ENCODE measurements at regions of chr1 and their contacts with region 1.

Region 1: DNA sequence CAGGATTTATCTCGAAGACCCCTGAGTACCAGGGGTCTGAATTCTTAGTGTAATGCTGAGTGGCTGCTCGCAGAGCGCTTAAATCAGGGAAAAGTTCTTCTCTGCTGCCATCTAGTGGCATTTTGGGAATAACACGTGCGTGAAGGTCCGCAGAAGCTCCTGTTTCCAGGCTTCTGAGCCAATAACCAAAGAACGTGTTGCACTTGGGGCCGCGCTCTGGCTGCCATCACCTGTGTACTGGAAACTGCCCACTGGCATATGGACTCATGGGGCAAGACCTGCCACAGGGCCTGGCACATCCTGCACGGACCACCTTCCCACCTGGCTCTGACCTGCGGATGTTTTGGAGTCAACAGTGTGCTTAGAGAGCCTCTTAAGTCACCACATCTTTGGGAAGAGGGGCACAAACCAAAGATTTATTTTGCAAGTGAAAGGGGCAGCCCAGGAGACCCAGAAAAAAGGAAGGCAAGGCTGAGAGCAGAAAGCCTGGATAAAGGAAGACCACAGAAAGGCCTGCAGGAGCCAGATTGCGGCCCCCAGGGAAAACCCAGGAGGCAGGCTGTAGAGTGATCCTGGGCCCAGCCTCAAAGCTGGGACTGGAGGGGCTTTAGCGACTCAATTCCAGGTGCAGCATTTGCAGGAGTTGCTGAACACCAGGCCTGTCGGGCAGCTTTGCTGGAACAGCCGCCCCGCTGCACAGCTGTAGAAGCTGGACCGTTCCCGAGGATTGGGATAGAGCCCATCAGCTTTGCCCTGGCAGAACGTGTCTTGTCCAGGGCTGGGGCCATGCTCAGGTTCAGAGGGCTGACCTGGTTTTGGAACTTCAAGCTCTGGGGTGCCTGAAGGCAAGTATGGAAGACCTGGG is 13.0 kb downstream of the CHIT1 start:
- DNase-seq: peak; percentile 88
- ATAC-seq: peak; percentile 85
- H3K4me3 ChIP-seq: no peak overlapping the region
- H3K27ac ChIP-seq: no peak overlapping the region
- H3K4me1 ChIP-seq: no peaks in the 10 kb centered on the region
- H3K27me3 ChIP-seq: peaks cover 42% of the 10 kb centered on the region
- CTCF ChIP-seq: peak; percentile 90

Region 2: DNA sequence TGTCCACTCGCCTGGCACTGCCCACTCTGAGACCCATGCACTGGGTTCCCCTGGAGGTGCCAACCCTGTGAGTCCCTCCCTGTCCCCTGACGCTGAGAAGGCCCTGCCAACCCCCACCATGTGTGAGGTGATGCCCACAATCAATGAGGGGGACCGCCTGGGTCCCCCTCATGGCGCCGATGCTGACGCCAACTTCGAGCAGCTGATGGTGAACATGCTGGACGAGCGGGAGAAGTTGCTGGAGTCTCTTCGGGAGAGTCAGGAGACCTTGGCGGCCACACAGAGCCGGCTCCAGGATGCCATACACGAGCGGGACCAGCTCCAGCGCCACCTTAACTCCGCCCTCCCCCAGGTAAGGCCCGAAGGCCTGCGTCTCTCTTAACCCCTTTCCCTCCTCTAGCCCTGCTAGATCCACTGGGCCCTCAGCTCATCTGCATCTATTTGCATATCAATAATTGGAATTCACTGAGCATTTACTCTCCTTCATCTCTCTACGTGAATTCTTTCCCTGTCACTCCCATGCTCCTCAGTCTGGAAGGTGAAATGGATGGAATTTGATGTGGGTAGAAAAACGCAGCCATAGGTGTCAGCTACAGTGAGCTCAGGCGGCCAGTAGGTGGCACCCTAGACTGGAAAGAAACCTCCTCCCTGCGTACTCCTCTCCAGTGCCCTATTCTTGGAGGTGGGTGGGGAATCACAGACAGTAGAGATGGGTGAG is 177.5 kb before region 1 on chr1:
- CTCF ChIA-PET with region 1: interaction called, 17 read pairs
- POLR2A ChIA-PET with region 1: interaction called, 4 read pairs
- intact Hi-C with region 1: loop called (anchors 1 kb)
- DNase-seq: peak; percentile 81
- ATAC-seq: peak; percentile 85
- H3K4me3 ChIP-seq: no peak overlapping the region
- H3K27ac ChIP-seq: no peak overlapping the region
- H3K4me1 ChIP-seq: peaks cover 11% of the 10 kb centered on the region; the same call in 1 of the 2 replicates
- H3K27me3 ChIP-seq: no peaks in the 10 kb centered on the region
- CTCF ChIP-seq: peak; percentile 98

Region 3: DNA sequence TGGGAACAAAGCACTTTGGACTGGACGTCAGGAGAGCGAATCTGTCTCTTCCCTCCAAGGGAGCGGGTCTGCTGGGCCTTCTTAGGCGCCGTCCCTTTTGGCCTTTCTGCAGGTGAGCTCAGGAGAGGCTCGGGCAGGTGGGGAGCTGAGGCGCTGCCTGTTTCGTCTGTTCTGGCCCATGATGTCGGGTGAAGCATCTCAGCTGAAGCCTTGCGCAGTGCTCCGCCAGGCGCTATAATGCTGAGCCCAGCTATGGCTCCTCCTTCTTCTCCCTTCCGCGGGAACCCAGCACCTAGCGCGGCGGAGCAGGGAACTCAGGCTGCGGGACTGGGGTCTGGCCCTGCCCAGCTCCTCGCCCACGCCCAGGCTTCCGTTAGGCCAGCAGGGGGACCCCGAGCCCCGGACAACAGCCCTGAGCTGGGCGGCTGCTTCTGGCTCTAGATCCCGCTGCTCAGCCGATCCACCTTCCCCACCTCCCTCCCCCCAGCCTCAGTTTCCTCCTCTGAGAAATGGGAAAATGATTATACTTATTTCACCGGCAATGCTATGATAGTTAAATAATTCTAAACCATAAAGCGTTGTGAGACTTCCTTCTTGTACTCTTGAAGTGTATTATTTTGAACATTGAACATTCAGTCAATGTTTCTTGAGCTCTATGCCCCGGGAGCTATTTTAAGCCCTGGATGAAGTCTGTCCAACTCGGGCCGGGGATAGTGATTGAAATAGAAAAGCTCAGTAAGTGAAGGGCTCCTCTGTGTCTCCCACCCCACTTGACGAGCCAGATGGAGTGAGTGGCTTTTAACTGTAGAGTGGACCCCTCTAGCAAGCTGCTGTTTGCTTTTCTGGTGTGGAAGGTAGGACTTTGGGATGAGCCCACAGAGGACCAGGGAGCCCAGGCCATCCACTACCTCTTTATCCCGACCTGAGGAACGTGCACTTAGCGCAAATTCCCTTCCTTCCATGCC is 98.6 kb before region 1 on chr1:
- CTCF ChIA-PET with region 1: interaction called, 36 read pairs
- POLR2A ChIA-PET with region 1: no interaction called
- intact Hi-C with region 1: loop called (anchors 1 kb)
- DNase-seq: peak; percentile 70
- ATAC-seq: peak; percentile 98
- H3K4me3 ChIP-seq: no peak overlapping the region
- H3K27ac ChIP-seq: no peak overlapping the region
- H3K4me1 ChIP-seq: no peaks in the 10 kb centered on the region
- H3K27me3 ChIP-seq: peaks cover 54% of the 10 kb centered on the region
- CTCF ChIP-seq: peak; percentile 90

Region 4: DNA sequence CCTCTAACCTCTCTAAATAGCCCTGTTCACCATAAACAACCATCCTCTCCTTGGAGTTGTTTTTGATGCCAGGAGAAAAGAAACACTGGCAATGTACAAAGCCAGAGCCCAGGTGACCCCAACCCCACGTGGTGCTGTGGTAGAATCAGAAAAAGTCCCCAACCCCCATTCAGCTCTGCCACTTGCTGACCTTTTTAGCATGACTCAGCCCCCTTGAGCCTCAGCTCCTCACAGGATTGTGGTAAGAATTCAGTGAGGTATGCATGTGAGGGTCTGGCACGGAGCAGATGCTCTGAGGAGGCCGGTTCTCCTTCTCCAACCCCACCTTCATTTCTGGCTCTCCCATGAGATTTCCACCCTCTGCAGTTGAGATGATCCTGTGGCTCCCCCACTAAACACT is 18.9 kb before region 1 on chr1:
- CTCF ChIA-PET with region 1: no interaction called
- POLR2A ChIA-PET with region 1: no interaction called
- intact Hi-C with region 1: no loop called
- DNase-seq: no peak
- ATAC-seq: no peak
- H3K4me3 ChIP-seq: no peak overlapping the region
- H3K27ac ChIP-seq: no peak overlapping the region
- H3K4me1 ChIP-seq: no peaks in the 10 kb centered on the region
- H3K27me3 ChIP-seq: peaks cover 59% of the 10 kb centered on the region
- CTCF ChIP-seq: no peak